ENCODE measurements at regions of chr14 and their contacts with region 1.

Region 1: GRCh38 chr14:78598041-78598920 is 428.1 kb downstream of the NRXN3 start:
- H3K4me3 Mint-ChIP-seq: no peak overlapping the region
- H3K27ac Mint-ChIP-seq: no peak overlapping the region
- H3K4me1 Mint-ChIP-seq: no peaks in the 10 kb centered on the region
- H3K27me3 Mint-ChIP-seq: peaks cover 4% of the 10 kb centered on the region

Region 2: GRCh38 chr14:77862154-77862786 is 736.0 kb before region 1 on chr14:
- intact Hi-C with region 1: loop called (anchors 5 kb)
- H3K4me3 Mint-ChIP-seq: no peak overlapping the region
- H3K27ac Mint-ChIP-seq: no peak overlapping the region
- H3K4me1 Mint-ChIP-seq: peaks cover 8% of the 10 kb centered on the region
- H3K27me3 Mint-ChIP-seq: no peaks in the 10 kb centered on the region

Region 3: DNA sequence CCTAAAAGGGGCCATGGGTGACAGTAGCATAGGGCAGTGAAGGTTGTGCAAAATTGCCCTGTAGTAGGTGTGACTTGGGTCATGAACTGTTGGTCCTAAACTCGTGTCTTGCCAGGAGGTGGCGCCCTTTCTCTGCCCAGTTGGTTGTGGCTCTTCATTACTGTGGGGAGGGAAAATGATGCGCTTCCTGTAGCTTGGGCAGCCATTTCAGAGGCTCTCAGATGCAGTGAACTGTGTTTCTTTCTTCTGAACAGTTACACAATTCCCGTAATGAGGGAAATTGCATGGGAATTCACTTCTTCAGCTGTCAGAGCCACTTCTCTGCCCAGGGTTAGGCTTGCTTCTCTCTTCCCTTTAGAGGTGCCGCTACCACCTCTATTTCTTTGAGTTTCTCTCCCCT is 576.2 kb before region 1 on chr14:
- intact Hi-C with region 1: loop called (anchors 1 kb)
- H3K4me3 Mint-ChIP-seq: no peak overlapping the region
- H3K27ac Mint-ChIP-seq: no peak overlapping the region
- H3K4me1 Mint-ChIP-seq: no peaks in the 10 kb centered on the region
- H3K27me3 Mint-ChIP-seq: no peaks in the 10 kb centered on the region

Region 4: DNA sequence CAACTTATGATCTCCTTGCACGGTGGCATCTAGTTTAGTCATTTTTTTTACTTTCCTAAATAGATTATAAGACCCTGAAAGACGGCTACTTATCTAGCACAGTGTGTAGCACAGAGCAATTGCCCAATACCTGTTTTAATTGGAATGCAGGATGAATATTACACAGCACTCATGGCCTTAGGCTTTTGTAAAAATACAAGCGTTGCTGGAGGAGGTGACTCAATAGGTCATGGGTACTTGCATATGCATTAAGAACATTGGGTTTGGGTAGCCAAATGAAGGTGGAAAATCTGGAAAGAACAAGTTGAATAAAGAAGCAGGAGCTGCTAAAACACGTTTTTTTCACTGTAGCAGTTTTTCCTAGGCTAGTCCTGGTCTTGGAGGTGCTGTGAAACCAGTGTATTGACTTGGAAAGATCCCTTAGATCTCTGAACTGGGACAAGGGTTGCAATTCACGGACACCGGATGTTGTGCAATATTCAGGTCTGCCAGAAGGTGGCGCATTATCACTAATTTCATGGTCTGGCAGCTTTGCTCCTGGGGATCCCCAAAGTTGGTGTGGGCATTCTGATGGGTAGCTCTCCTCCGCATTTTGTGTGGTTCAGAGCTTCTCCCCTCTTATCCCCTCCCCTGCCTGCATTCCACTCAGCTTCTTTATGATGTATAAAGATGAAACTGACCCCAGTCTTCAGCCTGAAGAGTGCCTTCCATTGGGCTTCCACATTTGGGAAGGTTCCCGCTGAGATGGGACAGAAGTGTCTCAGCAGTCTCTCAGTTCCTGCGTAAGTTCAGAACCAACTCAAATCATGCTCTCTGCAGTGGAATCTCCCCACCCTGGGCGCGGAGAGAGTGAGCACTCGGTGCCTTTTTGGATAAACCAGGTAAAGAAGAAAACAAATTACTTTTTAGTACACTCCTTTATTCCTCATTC is 149.9 kb before region 1 on chr14:
- intact Hi-C with region 1: loop called (anchors 5 kb)
- H3K4me3 Mint-ChIP-seq: no peak overlapping the region
- H3K27ac Mint-ChIP-seq: no peak overlapping the region
- H3K4me1 Mint-ChIP-seq: peaks cover 14% of the 10 kb centered on the region
- H3K27me3 Mint-ChIP-seq: peaks cover 1% of the 10 kb centered on the region

Region 5: GRCh38 chr14:79201550-79202207 is 603.4 kb after region 1 on chr14:
- intact Hi-C with region 1: no loop called
- H3K4me3 Mint-ChIP-seq: no peak overlapping the region
- H3K27ac Mint-ChIP-seq: no peak overlapping the region
- H3K4me1 Mint-ChIP-seq: no peaks in the 10 kb centered on the region
- H3K27me3 Mint-ChIP-seq: no peaks in the 10 kb centered on the region